ENCODE measurements at regions of chr11 and their contacts with region 1.

Region 1: GRCh38 chr11:67482825-67483798 is at the start of gene AIP:
- DNase-seq: peak; percentile 87
- ATAC-seq: peak; percentile 85
- H3K4me3 Mint-ChIP-seq: peak within 1 kb of the TSS; percentile 93
- H3K27ac Mint-ChIP-seq: peak within 1 kb of the TSS; percentile 98
- H3K4me1 Mint-ChIP-seq: peaks cover 58% of the 10 kb centered on the region
- H3K27me3 Mint-ChIP-seq: no peaks in the 10 kb centered on the region
- CTCF ChIP-seq: no peak
- total RNA-seq, gene AIP: 108 and 114 TPM in 2 replicates

Region 2: DNA sequence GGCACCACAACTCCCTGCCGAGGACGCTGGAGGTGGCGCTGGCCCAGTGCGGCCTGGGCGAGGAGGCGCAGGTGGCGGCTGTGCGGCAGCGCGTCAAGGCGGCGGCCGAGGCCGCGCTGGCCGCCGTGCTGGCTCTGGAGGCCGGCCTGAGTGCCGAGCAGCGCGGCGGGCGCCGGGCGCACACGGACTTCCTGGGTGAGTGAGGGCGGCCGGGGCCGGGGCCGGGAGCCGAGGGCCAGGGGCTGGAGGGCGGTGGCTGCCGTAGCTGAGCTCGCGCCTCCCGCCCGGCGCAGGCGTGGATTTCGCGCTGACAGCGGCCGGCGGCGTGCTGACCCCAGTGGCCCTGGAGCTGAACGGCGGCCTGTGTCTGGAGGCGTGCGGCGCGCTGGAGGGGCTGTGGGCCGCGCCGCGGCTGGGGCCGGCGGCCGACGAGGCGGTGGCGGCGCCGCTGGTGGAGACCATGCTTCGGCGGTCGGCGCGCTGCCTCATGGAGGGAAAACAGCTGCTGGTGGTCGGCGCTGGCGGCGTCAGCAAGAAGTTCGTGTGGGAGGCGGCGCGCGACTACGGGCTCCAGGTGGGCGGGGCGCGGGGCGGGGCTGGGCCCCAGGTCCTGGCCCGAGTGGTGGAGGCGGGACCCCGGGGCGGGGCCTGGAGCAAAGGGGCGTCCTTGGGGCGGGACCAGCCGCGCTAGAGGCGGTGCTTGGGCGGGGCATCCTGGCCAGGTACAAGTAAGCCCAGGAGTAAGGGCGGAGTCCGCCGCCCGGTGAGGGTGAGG is 62.3 kb before region 1 on chr11:
- CTCF ChIA-PET with region 1: no interaction called
- POLR2A ChIA-PET with region 1: interaction called, 16 read pairs
- intact Hi-C with region 1: no loop called
- DNase-seq: peak; percentile 98
- ATAC-seq: peak; percentile 85
- H3K4me3 Mint-ChIP-seq: peak overlapping the region; percentile 79
- H3K27ac Mint-ChIP-seq: peak overlapping the region; percentile 83
- H3K4me1 Mint-ChIP-seq: peaks cover 52% of the 10 kb centered on the region
- H3K27me3 Mint-ChIP-seq: no peaks in the 10 kb centered on the region
- CTCF ChIP-seq: no peak

Region 3: GRCh38 chr11:67428052-67428914 is 54.8 kb before region 1 on chr11 and contains the start of gene RPS6KB2:
- CTCF ChIA-PET with region 1: no interaction called
- POLR2A ChIA-PET with region 1: interaction called, 189 read pairs
- intact Hi-C with region 1: loop called (anchors 2 kb)
- DNase-seq: peak; percentile 99
- ATAC-seq: peak; percentile 81
- H3K4me3 Mint-ChIP-seq: peak within 1 kb of the TSS; percentile 98
- H3K27ac Mint-ChIP-seq: peak within 1 kb of the TSS; percentile 93
- H3K4me1 Mint-ChIP-seq: peaks cover 41% of the 10 kb centered on the region
- H3K27me3 Mint-ChIP-seq: no peaks in the 10 kb centered on the region
- CTCF ChIP-seq: no peak
- total RNA-seq, gene RPS6KB2: 66.9 and 74.5 TPM in 2 replicates

Region 4: DNA sequence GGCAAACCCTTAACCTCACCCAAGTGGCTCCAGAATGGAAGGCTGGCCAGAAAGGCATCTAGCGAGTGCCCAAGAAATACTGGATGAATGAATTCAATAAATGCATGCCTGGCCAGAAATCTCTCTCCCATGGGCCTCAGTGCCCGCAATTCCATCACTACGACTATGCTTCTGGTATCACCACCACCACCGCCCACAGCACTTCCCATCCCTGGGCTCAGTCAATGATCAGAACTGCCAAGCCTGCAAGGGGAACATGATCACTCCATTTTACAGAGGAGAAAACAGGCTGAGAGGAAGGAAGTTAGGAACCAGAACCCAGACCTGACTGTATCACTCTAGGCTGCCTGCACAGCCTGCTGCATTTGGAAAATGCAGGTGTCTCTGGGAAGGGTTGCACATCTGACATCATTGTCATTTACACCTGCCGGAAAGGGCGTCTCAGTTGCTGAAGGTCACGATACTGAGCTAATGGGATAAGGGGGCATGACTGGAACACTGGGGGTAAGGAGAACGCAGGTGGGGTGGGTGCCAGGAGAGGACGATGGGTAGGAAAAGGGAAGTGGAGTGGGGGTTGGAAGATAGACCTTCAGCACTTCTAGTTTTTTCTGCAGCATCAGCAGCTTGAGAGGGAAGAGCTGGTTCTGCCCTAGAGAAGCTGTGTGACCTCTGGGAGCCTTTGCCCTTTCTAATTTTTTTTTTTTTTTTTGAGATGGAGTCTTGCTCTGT is 33.8 kb before region 1 on chr11:
- CTCF ChIA-PET with region 1: no interaction called
- POLR2A ChIA-PET with region 1: interaction called, 14 read pairs
- intact Hi-C with region 1: no loop called
- DNase-seq: no peak
- ATAC-seq: no peak
- H3K4me3 Mint-ChIP-seq: no peak overlapping the region
- H3K27ac Mint-ChIP-seq: peak overlapping the region; percentile 42
- H3K4me1 Mint-ChIP-seq: peaks cover 71% of the 10 kb centered on the region
- H3K27me3 Mint-ChIP-seq: no peaks in the 10 kb centered on the region
- CTCF ChIP-seq: no peak

Region 5: DNA sequence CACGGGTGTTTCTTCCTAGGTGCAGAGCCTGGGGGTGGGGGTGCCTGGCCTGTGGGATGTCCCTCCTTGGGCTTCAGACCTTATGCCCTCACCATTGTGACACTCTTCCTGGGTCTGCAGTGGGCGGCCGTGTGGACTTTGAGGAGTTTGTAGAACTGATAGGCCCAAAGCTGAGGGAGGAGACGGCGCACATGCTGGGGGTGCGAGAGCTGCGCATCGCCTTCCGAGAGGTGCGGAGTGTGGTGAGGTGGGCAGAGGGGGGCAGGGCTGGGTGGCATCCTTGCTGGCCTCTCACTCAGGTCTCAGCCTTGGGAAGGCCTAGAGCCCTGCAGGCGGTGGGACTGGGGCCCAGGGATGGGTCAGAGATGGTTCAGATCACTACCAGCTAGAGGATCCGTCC is 25.7 kb before region 1 on chr11:
- CTCF ChIA-PET with region 1: no interaction called
- POLR2A ChIA-PET with region 1: interaction called, 15 read pairs
- intact Hi-C with region 1: no loop called
- DNase-seq: no peak
- ATAC-seq: no peak
- H3K4me3 Mint-ChIP-seq: peak overlapping the region; percentile 13
- H3K27ac Mint-ChIP-seq: peak overlapping the region; percentile 84
- H3K4me1 Mint-ChIP-seq: peaks cover 53% of the 10 kb centered on the region
- H3K27me3 Mint-ChIP-seq: no peaks in the 10 kb centered on the region
- CTCF ChIP-seq: no peak

Region 6: GRCh38 chr11:67468835-67469811 is 14.0 kb before region 1 on chr11 and contains the start of gene TMEM134:
- CTCF ChIA-PET with region 1: interaction called, 3 read pairs
- POLR2A ChIA-PET with region 1: interaction called, 48 read pairs
- intact Hi-C with region 1: loop called (anchors 1 kb)
- DNase-seq: peak; percentile 88
- ATAC-seq: peak; percentile 73
- H3K4me3 Mint-ChIP-seq: peak within 1 kb of the TSS; percentile 89
- H3K27ac Mint-ChIP-seq: peak within 1 kb of the TSS; percentile 91
- H3K4me1 Mint-ChIP-seq: peaks cover 49% of the 10 kb centered on the region
- H3K27me3 Mint-ChIP-seq: no peaks in the 10 kb centered on the region
- CTCF ChIP-seq: no peak
- total RNA-seq, gene TMEM134: 76.0 and 83.5 TPM in 2 replicates